Vagina (tissue), 2 donors: ENCODE measurements at regions of chr15 and their contacts with region 1.

Region 1: DNA sequence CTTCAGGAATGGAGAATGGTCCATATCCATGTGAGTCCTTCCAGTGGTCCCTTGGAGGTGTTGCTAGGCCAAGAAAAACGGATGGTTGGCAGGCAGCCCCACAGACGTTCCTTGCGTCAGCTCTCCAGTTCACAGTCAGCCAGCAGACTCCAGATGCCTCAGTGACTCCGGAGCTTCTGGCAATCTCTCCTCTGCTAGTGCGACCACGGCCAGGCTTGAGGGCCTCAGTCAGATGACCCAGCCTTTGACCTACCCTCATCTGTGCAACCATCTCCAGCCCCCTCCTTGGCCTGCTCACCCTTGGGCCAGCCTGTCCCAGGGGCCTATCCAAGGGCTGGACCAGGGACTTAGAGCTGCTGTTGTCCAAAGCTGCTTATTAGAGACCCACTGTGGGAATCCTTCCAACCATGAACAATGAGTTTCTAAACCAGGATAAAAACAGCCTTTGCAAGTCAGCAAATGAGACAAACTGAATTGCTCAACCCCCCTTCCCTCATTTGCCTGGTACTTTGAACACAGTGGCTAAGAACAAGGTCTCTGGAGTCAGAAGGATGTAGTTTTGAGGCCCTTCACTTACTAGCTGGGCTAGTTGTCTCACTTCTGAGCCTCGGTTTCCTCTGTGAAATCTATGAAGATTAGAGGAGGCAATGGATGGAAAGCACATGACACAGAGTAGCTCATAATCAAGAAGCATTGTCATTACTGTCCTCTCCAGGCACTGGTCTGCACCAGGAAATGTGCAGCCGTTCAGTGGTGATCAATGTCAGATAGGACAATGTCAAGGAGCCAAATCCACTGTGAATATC is 44.8 kb downstream of the ANP32A start:
- DNase-seq: peak; percentile 94
- H3K4me3 ChIP-seq: no peak overlapping the region
- H3K27ac ChIP-seq: peak overlapping the region; percentile 23
- H3K4me1 ChIP-seq: peaks cover 17% of the 10 kb centered on the region
- H3K27me3 ChIP-seq: no peaks in the 10 kb centered on the region
- CTCF ChIP-seq: no peak
- POLR2A ChIP-seq: no peak

Region 2: GRCh38 chr15:68820295-68821189 is 44.7 kb after region 1 on chr15 and contains the start of gene ANP32A:
- intact Hi-C with region 1: loop called (anchors 5 kb)
- DNase-seq: peak in 1 of 2 donors; percentile 97
- H3K4me3 ChIP-seq: peak within 1 kb of the TSS; percentile 66 to 99
- H3K27ac ChIP-seq: peak within 1 kb of the TSS; percentile 98
- H3K4me1 ChIP-seq: peaks cover 27% of the 10 kb centered on the region
- H3K27me3 ChIP-seq: no peaks in the 10 kb centered on the region
- CTCF ChIP-seq: no peak
- POLR2A ChIP-seq: peak in 1 of 2 donors; percentile 81
- total RNA-seq, gene ANP32A: 55.2 TPM